CD4-positive, alpha-beta memory T cell (primary cell): ENCODE measurements at regions of chr1 and their contacts with region 1.

Region 1: GRCh38 chr1:160711602-160712311 is at the start of gene CD48:
- DNase-seq: peak; percentile 67 to 80 (median 78)
- H3K4me3 ChIP-seq: peak within 1 kb of the TSS; percentile 88 to 96
- H3K4me3 Mint-ChIP-seq: no peak within 1 kb of the TSS
- H3K27ac ChIP-seq: peak within 1 kb of the TSS; percentile 96
- H3K27ac Mint-ChIP-seq: peak within 1 kb of the TSS in 1 of 7 donors; percentile 95
- H3K4me1 ChIP-seq: peaks cover 62% of the 10 kb centered on the region
- H3K4me1 Mint-ChIP-seq: peaks cover 17 to 31% (median 29%) of the 10 kb centered on the region in 4 donors
- H3K27me3 ChIP-seq: no peaks in the 10 kb centered on the region
- H3K27me3 Mint-ChIP-seq: no peaks in the 10 kb centered on the region
- total RNA-seq, gene CD48: 301 to 329 TPM

Region 2: DNA sequence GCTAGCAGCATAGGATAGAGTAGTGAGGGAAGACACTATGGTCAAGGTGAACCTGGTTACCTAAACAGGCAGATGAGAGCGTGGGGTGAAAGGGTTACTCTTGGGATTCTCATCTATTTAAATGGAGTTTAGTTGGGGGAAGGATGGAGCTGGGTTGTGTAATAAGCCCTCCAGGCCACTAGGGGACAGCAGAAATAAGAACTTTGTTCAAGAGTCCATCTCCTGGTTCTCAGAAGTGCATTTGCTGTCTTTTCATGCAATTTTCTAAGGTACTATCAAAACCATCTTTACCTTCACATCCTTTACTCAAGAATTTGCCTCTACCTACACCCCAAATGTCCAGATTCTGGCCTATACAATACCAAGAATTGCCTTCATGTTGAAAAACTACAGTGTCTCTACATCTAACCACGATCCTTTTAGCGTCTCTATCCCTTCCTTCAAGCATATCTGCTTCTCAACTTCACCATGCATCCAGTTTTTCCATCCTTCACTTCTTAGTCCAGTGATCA is 92.9 kb before region 1 on chr1:
- CTCF ChIA-PET with region 1: interaction called, 12 read pairs
- POLR2A ChIA-PET with region 1: interaction called, 7 read pairs
- intact Hi-C with region 1: no loop called
- DNase-seq: peak; percentile 52 to 58 (median 55)
- H3K4me3 ChIP-seq: no peak overlapping the region
- H3K4me3 Mint-ChIP-seq: peak overlapping the region in 5 of 8 donors; percentile 4 to 41 (median 23)
- H3K27ac ChIP-seq: no peak overlapping the region
- H3K27ac Mint-ChIP-seq: peak overlapping the region; percentile 61 to 94 (median 84)
- H3K4me1 ChIP-seq: peaks cover 86% of the 10 kb centered on the region
- H3K4me1 Mint-ChIP-seq: peaks cover 53 to 86% (median 69%) of the 10 kb centered on the region in 4 donors
- H3K27me3 ChIP-seq: no peaks in the 10 kb centered on the region
- H3K27me3 Mint-ChIP-seq: no peaks in the 10 kb centered on the region

Region 3: GRCh38 chr1:160629286-160630210 is 82.2 kb before region 1 on chr1:
- CTCF ChIA-PET with region 1: interaction called, 3 read pairs
- POLR2A ChIA-PET with region 1: interaction called, 17 read pairs
- intact Hi-C with region 1: no loop called
- DNase-seq: peak; percentile 88 to 94 (median 91)
- H3K4me3 ChIP-seq: peak overlapping the region; percentile 18 to 36
- H3K4me3 Mint-ChIP-seq: peak overlapping the region; percentile 80 to 91 (median 84)
- H3K27ac ChIP-seq: peak overlapping the region; percentile 93
- H3K27ac Mint-ChIP-seq: peak overlapping the region; percentile 87 to 100 (median 99)
- H3K4me1 ChIP-seq: peaks cover 98% of the 10 kb centered on the region
- H3K4me1 Mint-ChIP-seq: peaks cover 82 to 100% (median 93%) of the 10 kb centered on the region in 4 donors
- H3K27me3 ChIP-seq: no peaks in the 10 kb centered on the region
- H3K27me3 Mint-ChIP-seq: no peaks in the 10 kb centered on the region

Region 4: DNA sequence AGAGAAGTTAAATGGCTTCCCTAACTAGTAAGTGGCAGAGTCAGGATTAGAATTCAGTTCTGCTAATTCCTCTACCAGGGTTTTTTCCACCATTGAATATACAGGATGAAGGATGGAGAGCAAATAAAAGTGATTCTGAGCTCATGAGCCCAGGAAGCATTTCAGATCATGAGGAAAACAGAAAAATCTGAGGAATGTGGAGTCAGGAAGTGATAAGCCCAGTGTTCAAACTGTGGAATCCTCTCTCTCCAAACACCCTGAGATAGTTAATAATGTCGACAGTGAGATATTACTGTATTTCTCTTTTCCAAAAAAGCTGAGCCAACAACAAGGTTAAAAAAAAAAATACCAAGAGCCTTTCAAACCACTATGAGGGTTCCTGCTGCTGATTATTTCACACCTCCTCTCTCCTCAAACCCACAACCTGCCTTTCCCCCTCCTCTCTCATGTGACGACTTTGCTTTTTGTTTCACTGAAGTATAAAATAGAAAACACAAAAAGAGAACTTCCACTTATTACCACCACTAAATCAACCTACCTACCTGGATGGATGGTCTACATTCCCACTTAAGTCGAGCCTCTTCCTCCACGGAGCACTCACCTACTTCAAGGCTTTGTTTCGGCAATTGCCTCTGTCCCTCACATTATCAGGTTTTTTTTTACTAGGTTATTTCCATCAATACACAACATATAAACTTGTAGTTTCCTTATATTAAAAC is 73.8 kb before region 1 on chr1:
- CTCF ChIA-PET with region 1: interaction called, 3 read pairs
- POLR2A ChIA-PET with region 1: interaction called, 10 read pairs
- intact Hi-C with region 1: no loop called
- DNase-seq: peak; percentile 82 to 89 (median 85)
- H3K4me3 ChIP-seq: peak overlapping the region; percentile 31 to 39
- H3K4me3 Mint-ChIP-seq: peak overlapping the region; percentile 75 to 87 (median 82)
- H3K27ac ChIP-seq: peak overlapping the region; percentile 68
- H3K27ac Mint-ChIP-seq: peak overlapping the region; percentile 87 to 99 (median 98)
- H3K4me1 ChIP-seq: peaks cover 99% of the 10 kb centered on the region
- H3K4me1 Mint-ChIP-seq: peaks cover 77 to 98% (median 88%) of the 10 kb centered on the region in 4 donors
- H3K27me3 ChIP-seq: no peaks in the 10 kb centered on the region
- H3K27me3 Mint-ChIP-seq: no peaks in the 10 kb centered on the region

Region 5: DNA sequence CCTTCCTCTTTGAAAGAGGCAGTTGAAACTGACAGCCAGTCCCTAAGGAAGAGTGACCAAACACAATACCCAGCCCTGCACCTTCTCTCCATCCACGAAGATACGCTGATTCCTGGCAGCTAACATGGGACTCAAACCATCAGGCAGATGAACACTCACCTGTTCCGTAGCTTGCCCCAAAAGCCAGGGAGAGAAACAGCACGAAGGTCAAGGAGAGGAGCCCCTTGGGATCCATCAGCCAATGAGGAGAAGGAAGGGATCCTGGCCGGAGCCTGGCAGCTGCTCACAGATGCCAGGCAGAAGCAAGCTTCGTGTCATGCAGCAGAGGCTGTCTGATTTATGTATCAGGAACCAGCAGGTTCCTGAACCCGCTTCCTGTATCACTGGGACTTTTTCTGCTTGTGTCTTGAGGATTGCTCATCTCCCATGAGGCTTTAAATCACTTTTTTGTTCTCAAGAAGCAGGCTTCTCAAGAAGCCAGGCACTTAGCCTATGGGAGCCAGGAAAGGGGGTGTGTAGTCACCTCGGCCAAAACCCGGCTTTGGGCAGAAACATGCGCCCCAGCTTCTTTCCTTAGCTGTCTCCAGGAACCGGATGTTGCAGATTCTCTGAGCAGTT is 64.9 kb before region 1 on chr1 and contains the start of gene SLAMF1:
- CTCF ChIA-PET with region 1: interaction called, 3 read pairs
- POLR2A ChIA-PET with region 1: interaction called, 21 read pairs
- intact Hi-C with region 1: no loop called
- DNase-seq: peak; percentile 45 to 74 (median 51)
- H3K4me3 ChIP-seq: peak within 1 kb of the TSS; percentile 80 to 97
- H3K4me3 Mint-ChIP-seq: peak within 1 kb of the TSS; percentile 98 to 100 (median 99)
- H3K27ac ChIP-seq: peak within 1 kb of the TSS; percentile 88
- H3K27ac Mint-ChIP-seq: peak within 1 kb of the TSS; percentile 87 to 98 (median 97)
- H3K4me1 ChIP-seq: peaks cover 55% of the 10 kb centered on the region
- H3K4me1 Mint-ChIP-seq: peaks cover 47 to 94% (median 61%) of the 10 kb centered on the region in 4 donors
- H3K27me3 ChIP-seq: no peaks in the 10 kb centered on the region
- H3K27me3 Mint-ChIP-seq: no peaks in the 10 kb centered on the region
- total RNA-seq, gene SLAMF1: 59.8 to 59.9 TPM

Region 6: GRCh38 chr1:160726498-160727315 is 14.9 kb after region 1 on chr1:
- CTCF ChIA-PET with region 1: interaction called, 47 read pairs
- POLR2A ChIA-PET with region 1: interaction called, 26 read pairs
- intact Hi-C with region 1: loop called (anchors 2 kb)
- DNase-seq: peak; percentile 67 to 76 (median 74)
- H3K4me3 ChIP-seq: no peak overlapping the region
- H3K4me3 Mint-ChIP-seq: no peak overlapping the region
- H3K27ac ChIP-seq: no peak overlapping the region
- H3K27ac Mint-ChIP-seq: no peak overlapping the region
- H3K4me1 ChIP-seq: peaks cover 24% of the 10 kb centered on the region
- H3K4me1 Mint-ChIP-seq: peaks cover 11 to 20% (median 15%) of the 10 kb centered on the region in 4 donors
- H3K27me3 ChIP-seq: no peaks in the 10 kb centered on the region
- H3K27me3 Mint-ChIP-seq: no peaks in the 10 kb centered on the region

Region 7: DNA sequence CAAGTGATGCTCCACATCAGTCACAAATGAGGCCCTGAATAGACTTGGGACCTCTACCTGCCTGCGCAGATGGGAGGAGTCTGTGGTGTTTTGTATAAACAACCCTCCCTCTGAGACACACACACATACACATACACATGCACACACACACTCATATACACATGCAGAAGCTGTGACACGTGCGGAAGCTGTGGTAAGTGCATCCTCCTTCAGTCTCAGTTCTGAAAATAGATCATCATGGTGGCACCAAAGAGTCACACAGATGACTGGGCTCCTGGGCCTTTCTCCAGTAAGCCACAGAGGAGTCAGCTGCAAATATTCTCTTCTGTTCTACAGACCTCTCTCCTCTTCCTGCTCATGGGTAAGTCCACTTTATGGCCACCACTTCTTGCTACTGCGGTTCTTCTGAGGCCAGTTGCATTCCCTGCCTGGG is 84.2 kb after region 1 on chr1 and contains the start of gene LY9:
- CTCF ChIA-PET with region 1: no interaction called
- POLR2A ChIA-PET with region 1: interaction called, 44 read pairs
- intact Hi-C with region 1: loop called (anchors 1 kb)
- DNase-seq: peak; percentile 90 to 96 (median 95)
- H3K4me3 ChIP-seq: peak within 1 kb of the TSS; percentile 49 to 78
- H3K4me3 Mint-ChIP-seq: peak within 1 kb of the TSS; percentile 97 to 99 (median 98)
- H3K27ac ChIP-seq: peak within 1 kb of the TSS; percentile 82
- H3K27ac Mint-ChIP-seq: peak within 1 kb of the TSS; percentile 90 to 98 (median 97)
- H3K4me1 ChIP-seq: peaks cover 45% of the 10 kb centered on the region
- H3K4me1 Mint-ChIP-seq: peaks cover 37 to 69% (median 48%) of the 10 kb centered on the region in 4 donors
- H3K27me3 ChIP-seq: no peaks in the 10 kb centered on the region
- H3K27me3 Mint-ChIP-seq: no peaks in the 10 kb centered on the region
- total RNA-seq, gene LY9: 131 to 136 TPM